Activated CD4-positive, alpha-beta memory T cell treated with anti-CD3 and anti-CD28 coated beads, Interleukin-2, amount 10 ng/mL, durations not matched to agents 7 days and 5 days (primary cell): ENCODE measurements at regions of chr2 and their contacts with region 1.

Region 1: GRCh38 chr2:73176881-73177644 is 25.3 kb upstream of the NOTO start:
- DNase-seq: peak; percentile 88
- H3K4me3 Mint-ChIP-seq: peak overlapping the region; percentile 77
- H3K27ac Mint-ChIP-seq: no peak overlapping the region
- H3K4me1 Mint-ChIP-seq: peaks cover 20% of the 10 kb centered on the region
- H3K27me3 Mint-ChIP-seq: peaks cover 58% of the 10 kb centered on the region

Region 2: GRCh38 chr2:72924353-72925240 is 252.5 kb before region 1 on chr2:
- CTCF ChIA-PET with region 1: interaction called, 11 read pairs
- POLR2A ChIA-PET with region 1: interaction called, 3 read pairs
- DNase-seq: no peak
- H3K4me3 Mint-ChIP-seq: no peak overlapping the region
- H3K27ac Mint-ChIP-seq: no peak overlapping the region
- H3K4me1 Mint-ChIP-seq: peaks cover 11% of the 10 kb centered on the region
- H3K27me3 Mint-ChIP-seq: peaks cover 54% of the 10 kb centered on the region

Region 3: DNA sequence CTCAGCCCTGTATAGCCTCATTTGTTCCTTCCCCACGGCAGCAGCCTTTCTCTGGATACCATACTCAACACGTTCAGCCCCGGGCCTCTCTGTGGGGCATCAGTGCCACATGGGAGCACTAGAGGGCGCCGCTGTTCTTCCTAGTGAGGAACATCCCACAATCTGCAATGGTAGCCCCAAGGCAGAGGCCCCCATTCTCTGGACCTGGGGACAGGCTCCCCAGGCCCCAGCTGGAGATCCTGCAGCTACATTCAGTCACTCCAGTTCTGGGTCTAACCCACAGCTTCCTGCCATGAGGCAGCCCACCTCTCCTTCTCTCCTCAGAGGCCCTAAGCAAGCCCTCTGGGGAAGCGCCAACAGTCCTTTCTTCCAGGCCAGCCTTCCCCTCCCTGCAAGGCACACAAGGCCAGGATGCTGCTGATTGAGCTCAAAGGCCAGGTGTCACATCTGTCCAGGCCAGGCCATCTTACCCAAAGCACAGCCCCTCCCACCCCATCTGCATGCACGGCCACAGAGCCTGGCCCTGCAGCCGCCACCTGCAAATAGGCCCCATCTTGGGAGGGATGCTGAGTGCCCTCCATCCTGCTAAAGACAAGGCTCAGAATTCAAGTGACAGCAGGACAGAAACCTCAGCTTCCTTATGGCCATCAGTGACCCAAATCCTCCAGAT is 91.2 kb before region 1 on chr2:
- CTCF ChIA-PET with region 1: interaction called, 41 read pairs
- POLR2A ChIA-PET with region 1: interaction called, 3 read pairs
- DNase-seq: peak; percentile 84
- H3K4me3 Mint-ChIP-seq: no peak overlapping the region
- H3K27ac Mint-ChIP-seq: no peak overlapping the region
- H3K4me1 Mint-ChIP-seq: peaks cover 4% of the 10 kb centered on the region
- H3K27me3 Mint-ChIP-seq: no peaks in the 10 kb centered on the region

Region 4: DNA sequence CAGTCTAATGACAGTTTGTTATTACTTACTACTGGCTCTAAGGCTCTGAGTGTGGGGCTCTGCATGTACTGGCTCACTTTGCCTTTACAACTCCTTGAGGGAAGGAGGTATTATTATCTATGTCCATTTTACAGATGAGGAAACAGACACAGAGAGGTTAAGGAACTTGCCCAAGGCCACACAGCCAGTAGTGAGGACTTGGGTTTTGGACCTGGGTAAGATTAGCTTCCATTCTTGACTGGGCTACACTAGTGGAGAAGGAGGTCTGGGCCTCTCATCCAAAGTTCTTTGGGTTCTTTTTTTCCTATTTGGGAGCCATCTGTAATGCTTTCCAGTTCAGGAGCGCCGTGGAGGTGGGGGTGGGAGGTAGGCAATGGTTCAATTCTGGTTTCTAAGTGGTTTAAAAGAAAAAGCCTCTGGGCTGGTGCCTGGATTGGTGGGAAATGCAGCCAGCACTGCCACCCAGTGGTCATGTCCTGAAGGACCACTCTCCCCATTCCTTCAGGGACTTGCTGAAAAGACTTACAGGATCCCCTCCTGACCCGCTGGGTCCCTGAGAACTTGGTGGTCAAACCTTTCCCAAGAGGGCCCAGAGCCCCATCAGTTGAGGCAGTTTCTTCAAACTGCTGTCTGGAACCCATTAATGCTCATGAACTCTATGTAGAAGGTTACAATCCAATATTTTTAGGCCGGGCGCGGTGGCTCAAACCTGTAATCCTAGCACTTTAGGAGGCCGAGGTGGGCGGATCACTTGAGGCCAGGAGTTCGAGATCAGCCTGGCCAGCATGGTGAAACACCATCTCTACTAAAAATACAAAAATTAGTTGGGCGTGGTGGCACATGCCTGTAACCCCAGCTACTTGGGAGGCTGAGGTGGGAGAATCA is 13.3 kb before region 1 on chr2:
- CTCF ChIA-PET with region 1: interaction called, 14 read pairs
- POLR2A ChIA-PET with region 1: no interaction called
- DNase-seq: peak; percentile 71
- H3K4me3 Mint-ChIP-seq: no peak overlapping the region
- H3K27ac Mint-ChIP-seq: no peak overlapping the region
- H3K4me1 Mint-ChIP-seq: no peaks in the 10 kb centered on the region
- H3K27me3 Mint-ChIP-seq: peaks cover 5% of the 10 kb centered on the region

Region 5: DNA sequence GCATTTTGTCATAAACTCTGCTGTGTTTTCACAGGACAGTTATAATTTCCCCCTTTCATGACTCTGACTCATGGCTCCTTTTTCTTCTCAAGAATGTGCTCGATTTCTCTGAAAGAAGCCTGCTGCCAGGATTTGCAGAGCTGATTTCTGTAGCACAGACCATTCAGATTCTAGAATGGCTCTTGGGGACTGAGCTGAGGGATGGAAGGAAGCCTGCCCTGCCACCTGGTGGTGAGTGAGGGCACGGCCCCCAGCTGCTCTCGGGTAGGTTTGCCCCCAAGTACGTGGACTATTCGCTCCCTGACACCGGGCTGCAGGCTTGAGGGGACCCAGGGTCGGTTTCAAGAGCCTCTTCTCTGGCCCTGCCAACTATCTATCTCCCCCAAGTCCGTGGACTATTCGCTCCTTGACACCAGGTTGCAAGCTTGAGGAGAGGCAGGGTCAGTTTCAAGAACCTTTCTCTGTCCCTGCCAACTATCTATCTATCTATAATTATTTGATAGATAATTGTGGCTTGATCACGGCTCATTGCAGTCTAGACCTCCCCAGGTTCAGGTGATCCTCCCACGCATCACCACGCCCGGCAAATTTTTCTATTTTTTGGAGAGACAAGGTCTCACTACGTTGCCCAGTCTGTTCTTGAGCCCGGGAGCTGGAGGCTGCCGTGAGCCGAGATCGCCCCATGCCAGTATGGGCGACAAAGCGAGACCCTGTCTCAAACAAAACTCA is 35.5 kb after region 1 on chr2:
- CTCF ChIA-PET with region 1: interaction called, 40 read pairs
- POLR2A ChIA-PET with region 1: interaction called, 5 read pairs
- DNase-seq: peak; percentile 78
- H3K4me3 Mint-ChIP-seq: no peak overlapping the region
- H3K27ac Mint-ChIP-seq: no peak overlapping the region
- H3K4me1 Mint-ChIP-seq: peaks cover 31% of the 10 kb centered on the region
- H3K27me3 Mint-ChIP-seq: peaks cover 6% of the 10 kb centered on the region

Region 6: DNA sequence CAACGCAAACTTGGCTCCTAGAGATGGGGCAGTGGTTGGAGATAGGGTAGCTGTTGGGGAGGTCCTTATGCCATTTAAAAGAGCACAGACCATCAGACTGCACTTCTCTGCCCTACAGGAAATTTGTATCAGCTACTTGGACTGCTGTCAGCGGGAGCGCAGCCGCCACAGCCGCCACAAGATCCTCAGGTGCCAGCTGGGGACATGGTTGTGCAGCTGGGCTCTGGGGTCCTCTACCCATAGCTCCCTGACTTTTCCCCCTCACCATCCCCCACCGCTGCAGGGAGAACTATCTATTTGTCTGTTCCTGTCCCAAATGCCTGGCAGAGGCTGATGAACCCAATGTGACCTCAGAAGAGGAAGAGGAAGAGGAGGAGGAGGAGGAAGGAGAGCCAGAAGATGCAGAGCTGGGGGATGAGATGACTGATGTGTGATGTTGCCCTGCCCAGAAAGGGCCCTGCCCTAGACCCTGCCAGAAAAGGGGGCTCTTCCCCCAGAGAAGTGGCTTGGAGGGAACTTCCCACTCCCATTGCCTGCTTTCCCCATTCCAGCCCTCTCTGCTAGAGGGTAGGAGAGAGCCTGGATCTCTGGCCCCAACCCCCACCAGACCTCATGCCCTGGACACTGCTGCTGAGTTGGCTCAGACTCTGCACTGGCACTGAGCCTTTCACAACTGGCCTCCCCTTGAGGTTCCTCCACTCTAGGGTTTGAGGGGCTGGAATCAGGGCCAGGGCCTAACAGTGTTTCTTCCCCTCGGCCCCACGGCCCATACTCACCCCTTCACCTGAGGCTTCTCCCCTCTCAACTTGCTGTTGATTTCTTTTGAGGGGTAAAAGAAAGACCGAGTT is 48.7 kb after region 1 on chr2:
- CTCF ChIA-PET with region 1: no interaction called
- POLR2A ChIA-PET with region 1: no interaction called
- DNase-seq: no peak
- H3K4me3 Mint-ChIP-seq: no peak overlapping the region
- H3K27ac Mint-ChIP-seq: no peak overlapping the region
- H3K4me1 Mint-ChIP-seq: peaks cover 10% of the 10 kb centered on the region
- H3K27me3 Mint-ChIP-seq: no peaks in the 10 kb centered on the region